ENCODE measurements at regions of chr3 and their contacts with region 1.

Region 1: GRCh38 chr3:105868742-105869530 is at the start of gene CBLB:
- DNase-seq: peak; percentile 91
- ATAC-seq: peak; percentile 87
- H3K4me3 Mint-ChIP-seq: no peak within 1 kb of the TSS
- H3K27ac Mint-ChIP-seq: peak within 1 kb of the TSS; percentile 96
- H3K4me1 Mint-ChIP-seq: peaks cover 26% of the 10 kb centered on the region
- H3K27me3 Mint-ChIP-seq: no peaks in the 10 kb centered on the region
- CTCF ChIP-seq: no peak
- total RNA-seq, gene CBLB: 104 to 113 TPM

Region 2: GRCh38 chr3:105537500-105537981 is 331.4 kb before region 1 on chr3:
- CTCF ChIA-PET with region 1: no interaction called
- POLR2A ChIA-PET with region 1: no interaction called
- intact Hi-C with region 1: no loop called
- DNase-seq: no peak
- ATAC-seq: no peak
- H3K4me3 Mint-ChIP-seq: no peak overlapping the region
- H3K27ac Mint-ChIP-seq: no peak overlapping the region
- H3K4me1 Mint-ChIP-seq: no peaks in the 10 kb centered on the region
- H3K27me3 Mint-ChIP-seq: no peaks in the 10 kb centered on the region
- CTCF ChIP-seq: no peak

Region 3: GRCh38 chr3:105686278-105686897 is 182.5 kb before region 1 on chr3:
- CTCF ChIA-PET with region 1: interaction called, 3 read pairs
- POLR2A ChIA-PET with region 1: interaction called, 3 read pairs
- intact Hi-C with region 1: loop called (anchors 5 kb)
- DNase-seq: no peak
- ATAC-seq: peak; percentile 66
- H3K4me3 Mint-ChIP-seq: no peak overlapping the region
- H3K27ac Mint-ChIP-seq: peak overlapping the region; percentile 67
- H3K4me1 Mint-ChIP-seq: peaks cover 26% of the 10 kb centered on the region
- H3K27me3 Mint-ChIP-seq: no peaks in the 10 kb centered on the region
- CTCF ChIP-seq: peak; percentile 89

Region 4: GRCh38 chr3:105858017-105858416 is 10.9 kb before region 1 on chr3:
- CTCF ChIA-PET with region 1: interaction called, 3 read pairs
- POLR2A ChIA-PET with region 1: interaction called, 11 read pairs
- intact Hi-C with region 1: no loop called
- DNase-seq: no peak
- ATAC-seq: no peak
- H3K4me3 Mint-ChIP-seq: no peak overlapping the region
- H3K27ac Mint-ChIP-seq: peak overlapping the region; percentile 3
- H3K4me1 Mint-ChIP-seq: peaks cover 46% of the 10 kb centered on the region
- H3K27me3 Mint-ChIP-seq: no peaks in the 10 kb centered on the region
- CTCF ChIP-seq: no peak

Region 5: DNA sequence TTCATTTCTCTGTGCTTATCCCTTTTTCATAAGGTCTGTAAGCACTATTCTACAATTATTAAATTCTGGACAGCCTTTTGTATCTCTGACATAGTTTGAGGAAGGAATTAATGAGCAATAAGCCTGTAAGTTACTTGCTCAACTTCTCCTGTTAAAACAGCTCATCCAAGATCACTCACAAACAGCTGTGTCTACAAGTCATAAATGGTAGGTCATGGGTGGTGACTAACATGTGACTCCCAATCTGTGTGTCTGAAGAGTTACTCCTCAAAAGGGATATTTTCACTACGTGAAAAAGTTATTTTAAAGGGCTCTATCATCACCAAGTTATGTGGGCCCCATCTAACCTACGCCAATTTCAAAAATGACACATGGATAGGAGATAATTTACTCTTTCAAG is 145.0 kb after region 1 on chr3:
- CTCF ChIA-PET with region 1: no interaction called
- POLR2A ChIA-PET with region 1: interaction called, 5 read pairs
- intact Hi-C with region 1: loop called (anchors 5 kb)
- DNase-seq: peak; percentile 25
- ATAC-seq: peak; percentile 40
- H3K4me3 Mint-ChIP-seq: no peak overlapping the region
- H3K27ac Mint-ChIP-seq: peak overlapping the region; percentile 47
- H3K4me1 Mint-ChIP-seq: peaks cover 46% of the 10 kb centered on the region
- H3K27me3 Mint-ChIP-seq: no peaks in the 10 kb centered on the region
- CTCF ChIP-seq: no peak